ENCODE measurements at regions of chr13 and their contacts with region 1.

Region 1: DNA sequence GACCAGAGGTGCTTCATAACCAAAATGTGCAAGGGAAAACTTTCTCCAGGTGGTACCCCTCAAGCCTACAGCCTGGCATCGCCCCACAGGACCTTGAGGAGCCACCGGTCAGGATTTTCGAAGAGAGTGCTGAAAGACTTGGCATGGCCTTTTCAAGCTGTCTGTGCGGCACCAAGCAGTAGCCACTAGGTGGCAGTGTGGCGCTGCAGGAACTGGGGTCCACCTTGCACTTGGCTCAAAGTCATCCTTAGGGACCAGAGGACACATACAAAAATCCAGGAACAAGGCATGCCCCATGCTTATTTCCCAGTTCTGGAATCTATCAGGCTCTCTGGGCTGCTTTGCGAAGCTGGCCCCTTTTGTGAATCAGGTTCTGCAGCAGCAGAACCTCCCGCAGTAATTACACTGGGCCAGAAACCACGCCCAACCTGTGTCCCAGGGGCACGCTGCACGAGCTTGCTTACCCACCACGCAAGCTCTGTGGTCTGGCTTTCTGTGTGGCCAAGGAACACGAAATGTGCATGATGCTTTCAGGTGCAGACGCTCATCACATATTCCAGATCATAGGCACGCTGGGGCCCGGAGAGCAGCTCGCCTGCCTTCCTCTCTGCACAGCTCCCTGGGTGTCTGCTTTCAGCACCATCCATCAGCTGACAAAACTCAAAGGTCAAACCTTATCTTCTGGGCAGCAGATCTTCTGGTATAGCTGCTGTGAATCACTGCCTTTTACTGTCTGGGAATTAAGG is 87.2 kb downstream of the SLC7A1 start:
- DNase-seq: peak; percentile 90
- H3K4me3 ChIP-seq: peak overlapping the region in 1 of 2 experiments; percentile 32; a peak in 1 of 4 replicates
- H3K27ac ChIP-seq: peak overlapping the region in 1 of 2 experiments; percentile 78; a peak in 2 of 4 replicates
- H3K4me1 ChIP-seq: peaks cover 0 to 26% of the 10 kb centered on the region in 2 experiments; a peak in 2 of 4 replicates
- H3K27me3 ChIP-seq: no peaks in the 10 kb centered on the region
- CTCF ChIP-seq: peak; percentile 96
- EP300 ChIP-seq: peak in 1 of 2 experiments; percentile 53; a peak in 1 of 4 replicates
- RAD21 ChIP-seq: peak; percentile 95

Region 2: DNA sequence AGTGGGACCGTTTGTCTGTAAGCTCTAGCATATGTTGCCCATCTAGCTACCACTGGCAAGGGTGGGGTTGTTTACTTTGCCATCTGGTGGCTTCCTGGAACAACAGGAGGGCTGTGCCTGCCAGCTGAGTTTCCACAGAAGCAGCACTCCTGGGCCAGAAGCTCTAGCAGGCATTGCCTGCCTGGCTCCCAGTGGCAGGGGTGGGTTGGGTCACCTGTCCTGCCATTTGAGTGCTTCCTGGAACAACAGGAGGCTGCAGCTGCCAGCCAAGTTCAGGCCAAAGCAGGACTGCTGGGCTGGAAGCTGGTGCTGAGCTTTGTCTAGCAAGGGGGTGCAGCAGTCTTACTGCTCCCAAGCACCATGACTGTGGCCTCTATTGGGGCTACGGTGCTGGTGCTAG is 448.5 kb before region 1 on chr13:
- CTCF ChIA-PET with region 1: no interaction called
- POLR2A ChIA-PET with region 1: no interaction called
- DNase-seq: no peak
- H3K4me3 ChIP-seq: no peak overlapping the region
- H3K27ac ChIP-seq: no peak overlapping the region
- H3K4me1 ChIP-seq: no peaks in the 10 kb centered on the region
- H3K27me3 ChIP-seq: no peaks in the 10 kb centered on the region; the same call in 1 of the 2 replicates
- CTCF ChIP-seq: no peak
- EP300 ChIP-seq: no peak
- RAD21 ChIP-seq: no peak

Region 3: GRCh38 chr13:29472332-29472961 is 35.9 kb before region 1 on chr13:
- CTCF ChIA-PET with region 1: interaction called, 10 read pairs
- POLR2A ChIA-PET with region 1: no interaction called
- DNase-seq: peak; percentile 72
- H3K4me3 ChIP-seq: no peak overlapping the region; a peak in 1 of 4 replicates
- H3K27ac ChIP-seq: no peak overlapping the region
- H3K4me1 ChIP-seq: no peaks in the 10 kb centered on the region
- H3K27me3 ChIP-seq: no peaks in the 10 kb centered on the region
- CTCF ChIP-seq: peak; percentile 99
- EP300 ChIP-seq: no peak
- RAD21 ChIP-seq: peak; percentile 84

Region 4: DNA sequence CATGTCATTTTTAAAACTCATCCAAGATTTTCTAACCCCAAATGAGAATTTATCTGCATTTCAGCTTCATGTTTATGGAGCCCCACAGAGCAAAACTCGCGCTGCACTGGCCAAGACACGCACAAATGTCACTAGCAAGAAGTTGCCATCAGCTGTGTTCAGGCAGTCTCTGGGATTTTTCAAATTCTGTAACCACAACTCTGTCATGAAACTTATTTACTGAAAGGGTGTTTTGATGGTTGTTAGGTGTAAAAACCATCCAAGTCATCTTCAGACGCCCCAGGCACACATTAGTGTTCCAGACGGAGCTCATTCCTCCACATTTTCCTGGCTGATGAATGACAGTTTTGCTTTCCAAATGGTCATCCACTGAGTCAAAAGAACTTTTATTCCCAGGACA is 23.8 kb after region 1 on chr13:
- CTCF ChIA-PET with region 1: interaction called, 20 read pairs
- POLR2A ChIA-PET with region 1: no interaction called
- DNase-seq: no peak
- H3K4me3 ChIP-seq: no peak overlapping the region
- H3K27ac ChIP-seq: no peak overlapping the region
- H3K4me1 ChIP-seq: peaks cover 0 to 7% of the 10 kb centered on the region in 2 experiments; a peak in 2 of 4 replicates
- H3K27me3 ChIP-seq: no peaks in the 10 kb centered on the region
- CTCF ChIP-seq: no peak
- EP300 ChIP-seq: no peak
- RAD21 ChIP-seq: no peak

Region 5: GRCh38 chr13:29707876-29708543 is 199.7 kb after region 1 on chr13:
- CTCF ChIA-PET with region 1: interaction called, 15 read pairs
- POLR2A ChIA-PET with region 1: interaction called, 3 read pairs
- DNase-seq: peak; percentile 41
- H3K4me3 ChIP-seq: no peak overlapping the region
- H3K27ac ChIP-seq: no peak overlapping the region
- H3K4me1 ChIP-seq: peaks cover 0 to 13% of the 10 kb centered on the region in 2 experiments; a peak in 1 of 4 replicates
- H3K27me3 ChIP-seq: no peaks in the 10 kb centered on the region
- CTCF ChIP-seq: peak; percentile 72
- EP300 ChIP-seq: no peak
- RAD21 ChIP-seq: peak; percentile 71

Region 6: GRCh38 chr13:29771247-29771646 is 262.9 kb after region 1 on chr13:
- CTCF ChIA-PET with region 1: interaction called, 16 read pairs
- POLR2A ChIA-PET with region 1: no interaction called
- DNase-seq: peak; percentile 16
- H3K4me3 ChIP-seq: no peak overlapping the region
- H3K27ac ChIP-seq: no peak overlapping the region
- H3K4me1 ChIP-seq: no peaks in the 10 kb centered on the region; a peak in 1 of 4 replicates
- H3K27me3 ChIP-seq: no peaks in the 10 kb centered on the region
- CTCF ChIP-seq: peak; percentile 72
- EP300 ChIP-seq: no peak
- RAD21 ChIP-seq: peak; percentile 70

Region 7: GRCh38 chr13:30114571-30115256 is 606.4 kb after region 1 on chr13:
- CTCF ChIA-PET with region 1: interaction called, 143 read pairs
- POLR2A ChIA-PET with region 1: interaction called, 7 read pairs
- DNase-seq: peak; percentile 90
- H3K4me3 ChIP-seq: peak overlapping the region; percentile 72 to 77
- H3K27ac ChIP-seq: peak overlapping the region in 1 of 2 experiments; percentile 53; a peak in 1 of 4 replicates
- H3K4me1 ChIP-seq: peaks cover 10 to 22% of the 10 kb centered on the region in 2 experiments; a peak in 3 of 4 replicates
- H3K27me3 ChIP-seq: no peaks in the 10 kb centered on the region
- CTCF ChIP-seq: peak; percentile 93
- EP300 ChIP-seq: no peak
- RAD21 ChIP-seq: peak; percentile 83